ENCODE measurements at regions of chr11 and their contacts with region 1.

Region 1: GRCh38 chr11:84720706-84721402 is 906.3 kb downstream of the DLG2 start:
- DNase-seq: peak in 1 of 2 experiments; percentile 77
- H3K4me3 ChIP-seq: peak overlapping the region; percentile 54 to 77 (median 68)
- H3K27ac ChIP-seq: no peak overlapping the region
- H3K4me1 ChIP-seq: peaks cover 3 to 6% (median 5%) of the 10 kb centered on the region in 4 experiments; a peak in 5 of 7 replicates
- H3K27me3 ChIP-seq: peaks cover 0 to 11% (median 2%) of the 10 kb centered on the region in 4 experiments; a peak in 4 of 7 replicates
- CTCF ChIP-seq: no peak
- EP300 ChIP-seq: no peak
- POLR2A ChIP-seq: no peak
- RAD21 ChIP-seq: no peak

Region 2: DNA sequence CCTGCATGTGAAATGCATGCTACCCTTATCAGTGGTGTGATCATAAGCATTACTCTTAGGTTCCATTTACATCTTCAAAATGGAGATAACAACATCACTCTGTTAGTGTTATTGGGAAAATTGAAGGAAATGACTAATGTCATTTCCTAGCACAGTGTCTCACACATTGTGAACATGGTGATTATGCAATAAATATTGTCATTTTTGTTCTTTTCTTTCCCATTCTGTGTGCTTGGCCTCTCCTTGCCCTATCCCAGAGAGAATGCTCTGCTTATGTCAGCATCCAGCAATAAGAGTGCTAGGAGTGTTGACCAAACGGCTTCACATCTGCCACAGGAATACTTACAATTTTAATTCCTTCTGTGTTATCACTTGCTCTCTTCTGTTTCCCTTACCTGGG is 410.6 kb before region 1 on chr11:
- CTCF ChIA-PET with region 1: no interaction called
- POLR2A ChIA-PET with region 1: no interaction called
- DNase-seq: no peak
- H3K4me3 ChIP-seq: no peak overlapping the region
- H3K27ac ChIP-seq: no peak overlapping the region
- H3K4me1 ChIP-seq: peaks cover 0 to 5% (median 2%) of the 10 kb centered on the region in 4 experiments; a peak in 2 of 7 replicates
- H3K27me3 ChIP-seq: no peaks in the 10 kb centered on the region
- CTCF ChIP-seq: no peak
- EP300 ChIP-seq: no peak
- POLR2A ChIP-seq: no peak
- RAD21 ChIP-seq: no peak

Region 3: GRCh38 chr11:84642501-84642900 is 78.4 kb before region 1 on chr11:
- CTCF ChIA-PET with region 1: interaction called, 12 read pairs
- POLR2A ChIA-PET with region 1: no interaction called
- DNase-seq: no peak
- H3K4me3 ChIP-seq: no peak overlapping the region
- H3K27ac ChIP-seq: no peak overlapping the region
- H3K4me1 ChIP-seq: peaks cover 0 to 5% (median 2%) of the 10 kb centered on the region in 4 experiments; a peak in 2 of 7 replicates
- H3K27me3 ChIP-seq: no peaks in the 10 kb centered on the region
- CTCF ChIP-seq: peak in 2 of 3 experiments; percentile 23 to 32; a peak in 3 of 4 replicates
- EP300 ChIP-seq: no peak
- POLR2A ChIP-seq: no peak
- RAD21 ChIP-seq: peak; percentile 55 to 66

Region 4: GRCh38 chr11:84671334-84671999 is 49.4 kb before region 1 on chr11:
- CTCF ChIA-PET with region 1: no interaction called
- POLR2A ChIA-PET with region 1: no interaction called
- DNase-seq: no peak
- H3K4me3 ChIP-seq: no peak overlapping the region
- H3K27ac ChIP-seq: no peak overlapping the region
- H3K4me1 ChIP-seq: peaks cover 0 to 15% (median 2%) of the 10 kb centered on the region in 4 experiments; a peak in 2 of 7 replicates
- H3K27me3 ChIP-seq: no peaks in the 10 kb centered on the region
- CTCF ChIP-seq: no peak
- EP300 ChIP-seq: no peak
- POLR2A ChIP-seq: no peak
- RAD21 ChIP-seq: no peak

Measured in H1 (cell line).